Activated T-helper 1 cell treated with anti-CD3 and anti-CD28 coated beads, Interleukin-12 subunit alpha, Interleukin-12 subunit beta, Interleukin-2, Interleukin-4 antibody, amounts not matched to agents 30 ng/mL and 10 ng/mL and 1 ng/mL, durations not matched to agents 14 hours and 24 hours and 36 hours (primary cell): ENCODE measurements at regions of chr7 and their contacts with region 1.

Region 1: DNA sequence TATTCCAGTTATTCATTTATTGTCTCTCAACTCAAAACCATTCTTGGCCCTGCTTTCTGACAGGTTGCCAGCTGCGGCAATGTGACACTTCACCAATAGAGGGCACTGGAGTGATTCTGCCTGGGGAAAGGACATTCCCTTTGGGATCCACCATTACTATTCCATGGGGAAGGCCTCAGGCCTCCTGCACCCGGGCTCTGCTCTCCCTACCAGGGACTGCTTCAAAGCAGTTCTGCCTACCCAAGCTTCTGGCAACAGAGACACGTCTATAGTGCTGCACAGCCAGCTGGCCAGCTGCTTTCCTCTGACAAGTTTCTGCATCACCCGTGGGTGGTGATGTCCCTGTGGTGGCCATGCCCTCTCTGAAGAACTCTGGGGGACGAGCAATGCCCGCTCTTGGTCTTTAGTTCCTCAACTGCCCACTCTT is 163.8 kb downstream of the ELMO1 start:
- DNase-seq: no peak
- H3K4me3 Mint-ChIP-seq: no peak overlapping the region
- H3K27ac Mint-ChIP-seq: no peak overlapping the region
- H3K4me1 Mint-ChIP-seq: peaks cover 48% of the 10 kb centered on the region
- H3K27me3 Mint-ChIP-seq: no peaks in the 10 kb centered on the region

Region 2: DNA sequence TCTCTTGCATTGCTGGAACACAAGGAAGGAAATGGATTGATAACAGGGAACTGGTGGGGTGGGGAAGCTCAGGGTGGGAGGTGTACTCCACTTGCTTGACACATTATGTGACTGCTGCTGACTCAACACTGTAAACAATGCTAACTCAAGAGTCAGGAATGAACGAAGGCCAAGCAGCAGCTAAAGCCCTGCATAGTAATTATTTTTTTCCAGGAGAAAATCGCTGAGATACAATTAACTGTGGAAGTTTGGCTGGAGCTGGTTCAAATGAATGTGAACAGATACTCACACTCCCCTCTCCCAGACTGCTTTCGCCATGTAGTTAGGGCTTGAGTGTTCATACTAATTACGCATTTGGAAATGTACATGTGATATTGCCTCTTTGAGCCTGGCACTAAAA is 389.6 kb before region 1 on chr7:
- intact Hi-C with region 1: no loop called
- DNase-seq: no peak
- H3K4me3 Mint-ChIP-seq: no peak overlapping the region
- H3K27ac Mint-ChIP-seq: no peak overlapping the region
- H3K4me1 Mint-ChIP-seq: peaks cover 21% of the 10 kb centered on the region
- H3K27me3 Mint-ChIP-seq: no peaks in the 10 kb centered on the region

Region 3: DNA sequence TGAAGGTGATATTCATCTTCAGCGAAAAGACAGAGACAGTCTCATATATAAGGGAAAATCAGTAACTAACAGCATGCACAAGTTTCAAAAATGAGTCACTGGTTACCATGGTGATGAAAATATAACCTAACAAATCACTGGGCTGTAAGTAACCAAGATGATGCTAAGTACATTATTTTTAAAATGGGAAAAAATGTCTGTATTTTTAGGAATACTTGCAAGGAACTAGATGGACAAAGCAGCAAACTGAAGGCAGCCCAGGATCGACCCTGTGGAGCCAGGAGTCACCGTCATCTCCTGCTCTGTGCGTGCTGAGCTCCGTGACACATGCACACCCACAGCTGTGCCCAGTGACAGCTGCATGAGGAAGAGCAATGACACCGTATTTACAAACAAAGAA is 26.5 kb after region 1 on chr7:
- intact Hi-C with region 1: loop called (anchors 2 kb)
- DNase-seq: no peak
- H3K4me3 Mint-ChIP-seq: peak overlapping the region; percentile 9
- H3K27ac Mint-ChIP-seq: peak overlapping the region; percentile 87
- H3K4me1 Mint-ChIP-seq: peaks cover 54% of the 10 kb centered on the region
- H3K27me3 Mint-ChIP-seq: no peaks in the 10 kb centered on the region

Region 4: GRCh38 chr7:37495574-37496184 is 210.9 kb after region 1 on chr7:
- intact Hi-C with region 1: loop called (anchors 2 kb)
- DNase-seq: no peak
- H3K4me3 Mint-ChIP-seq: no peak overlapping the region
- H3K27ac Mint-ChIP-seq: no peak overlapping the region
- H3K4me1 Mint-ChIP-seq: peaks cover 10% of the 10 kb centered on the region
- H3K27me3 Mint-ChIP-seq: no peaks in the 10 kb centered on the region